ENCODE measurements at regions of chr21 and their contacts with region 1.

Region 1: DNA sequence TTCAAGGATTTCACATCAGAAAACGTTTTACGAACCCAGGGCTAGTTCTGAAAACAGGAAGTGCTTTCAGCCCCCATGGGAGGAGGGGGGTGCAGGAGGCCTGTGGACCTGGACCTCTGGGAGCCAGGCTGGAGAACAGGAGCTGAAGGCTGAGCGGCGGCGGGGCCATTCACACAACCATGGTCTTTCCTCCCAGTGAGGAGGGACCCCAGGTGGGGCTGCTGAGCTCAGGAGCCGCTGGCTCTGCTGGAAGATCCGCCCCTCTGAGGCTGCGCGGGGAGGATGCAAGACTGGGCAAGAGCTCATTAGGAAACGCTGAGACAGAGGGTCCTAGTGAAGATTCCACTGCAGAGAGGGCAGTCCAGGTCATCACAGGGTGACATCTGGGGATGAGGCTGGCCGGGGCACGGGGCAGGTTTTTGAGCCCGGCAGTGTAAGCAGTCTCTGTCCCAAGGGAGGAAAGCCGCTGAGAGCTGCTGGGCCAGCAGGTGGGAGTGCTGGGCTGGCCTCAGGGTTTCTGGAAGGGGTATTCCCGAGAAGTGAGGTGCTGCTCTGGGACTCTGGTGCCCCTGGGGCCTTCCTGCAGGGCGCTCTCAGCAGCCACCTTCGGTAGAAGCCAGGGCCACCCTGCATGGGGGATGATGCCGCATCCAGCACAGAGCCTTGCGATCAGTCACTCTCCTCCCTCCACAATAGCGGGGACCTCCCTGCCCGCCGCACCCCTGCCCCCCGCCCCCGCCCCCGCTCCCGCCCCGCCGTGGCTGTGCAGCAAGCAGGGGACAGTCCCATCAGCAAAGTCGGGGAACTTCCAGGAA is 7.5 kb downstream of the MX2 start:
- DNase-seq: peak; percentile 42
- ATAC-seq: peak; percentile 47
- H3K4me3 ChIP-seq: peak overlapping the region; percentile 78
- H3K27ac ChIP-seq: peak overlapping the region; percentile 98
- H3K4me1 ChIP-seq: peaks cover 42% of the 10 kb centered on the region
- H3K27me3 ChIP-seq: no peaks in the 10 kb centered on the region
- CTCF ChIP-seq: peak; percentile 24 to 60 (median 25); a peak in 4 of 6 replicates
- EP300 ChIP-seq: no peak
- POLR2A ChIP-seq: peak; percentile 70
- RAD21 ChIP-seq: peak; percentile 41

Region 2: GRCh38 chr21:41419911-41420862 is 50.9 kb after region 1 on chr21:
- CTCF ChIA-PET with region 1: interaction called, 24 read pairs
- POLR2A ChIA-PET with region 1: interaction called, 80 read pairs
- RAD21 ChIA-PET with region 1: interaction called, 36 read pairs
- SMC1A ChIA-PET with region 1: interaction called, 47 read pairs
- in situ Hi-C with region 1: no loop called
- intact Hi-C with region 1: no loop called
- DNase-seq: peak; percentile 39
- ATAC-seq: peak; percentile 94
- H3K4me3 ChIP-seq: peak overlapping the region; percentile 79
- H3K27ac ChIP-seq: peak overlapping the region; percentile 82
- H3K4me1 ChIP-seq: peaks cover 24% of the 10 kb centered on the region
- H3K27me3 ChIP-seq: no peaks in the 10 kb centered on the region
- CTCF ChIP-seq: no peak
- EP300 ChIP-seq: no peak; a peak in 1 of 4 replicates
- POLR2A ChIP-seq: peak; percentile 49; the same call in 1 of the 2 replicates
- RAD21 ChIP-seq: no peak

Region 3: GRCh38 chr21:41425954-41426675 is 56.8 kb after region 1 on chr21 and contains the start of gene MX1:
- CTCF ChIA-PET with region 1: interaction called, 24 read pairs
- POLR2A ChIA-PET with region 1: interaction called, 80 read pairs
- RAD21 ChIA-PET with region 1: interaction called, 36 read pairs
- SMC1A ChIA-PET with region 1: interaction called, 47 read pairs
- in situ Hi-C with region 1: no loop called
- intact Hi-C with region 1: loop called (anchors 1 kb)
- DNase-seq: peak; percentile 61
- ATAC-seq: peak; percentile 87
- H3K4me3 ChIP-seq: peak within 1 kb of the TSS; percentile 93
- H3K27ac ChIP-seq: peak within 1 kb of the TSS; percentile 100
- H3K4me1 ChIP-seq: peaks cover 44% of the 10 kb centered on the region
- H3K27me3 ChIP-seq: no peaks in the 10 kb centered on the region
- CTCF ChIP-seq: no peak
- EP300 ChIP-seq: no peak
- POLR2A ChIP-seq: peak; percentile 93
- RAD21 ChIP-seq: no peak
- polyA plus RNA-seq, gene MX1: 75.9 to 90.9 TPM

Region 4: DNA sequence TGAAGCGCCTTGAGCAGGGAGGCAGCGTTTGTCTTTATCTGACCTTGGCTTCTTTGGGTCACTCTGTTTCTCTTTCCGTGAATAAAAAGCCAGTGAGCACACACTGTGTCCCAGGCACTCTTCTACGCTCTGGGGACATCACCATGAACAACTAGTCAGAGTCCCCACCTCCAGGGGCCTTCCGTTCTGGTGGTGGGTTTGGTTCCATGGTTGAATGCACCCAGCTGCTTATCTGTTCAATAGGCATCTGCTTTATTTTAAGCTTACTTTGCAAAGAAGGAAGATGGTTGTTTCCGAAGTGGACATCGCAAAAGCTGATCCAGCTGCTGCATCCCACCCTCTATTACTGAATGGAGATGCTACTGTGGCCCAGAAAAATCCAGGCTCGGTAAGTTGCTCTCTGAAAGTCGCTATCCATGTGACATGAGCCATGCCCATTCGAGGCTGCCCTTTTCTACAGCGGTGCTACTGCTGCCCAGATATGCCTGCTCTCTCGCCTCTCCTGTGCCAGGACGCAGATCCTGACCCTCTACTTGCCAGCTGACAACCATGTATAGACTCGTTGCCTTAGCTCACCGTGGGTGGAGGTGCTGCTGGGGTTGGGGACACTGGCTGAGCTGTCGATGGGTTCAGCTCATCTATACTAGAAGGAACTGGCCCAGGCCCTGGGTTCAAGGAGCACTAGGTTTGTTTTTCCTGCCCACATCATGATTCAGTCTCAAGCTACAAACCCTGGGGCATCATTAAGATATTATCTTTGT is 62.7 kb after region 1 on chr21:
- CTCF ChIA-PET with region 1: interaction called, 24 read pairs
- POLR2A ChIA-PET with region 1: interaction called, 80 read pairs
- RAD21 ChIA-PET with region 1: interaction called, 6 read pairs
- SMC1A ChIA-PET with region 1: interaction called, 47 read pairs
- in situ Hi-C with region 1: no loop called
- intact Hi-C with region 1: no loop called
- DNase-seq: peak; percentile 56
- ATAC-seq: peak; percentile 68
- H3K4me3 ChIP-seq: no peak overlapping the region
- H3K27ac ChIP-seq: peak overlapping the region; percentile 22; the same call in 1 of the 2 replicates
- H3K4me1 ChIP-seq: peaks cover 39% of the 10 kb centered on the region
- H3K27me3 ChIP-seq: no peaks in the 10 kb centered on the region
- CTCF ChIP-seq: no peak
- EP300 ChIP-seq: peak in 1 of 2 experiments; percentile 29; a peak in 1 of 4 replicates
- POLR2A ChIP-seq: peak; percentile 67
- RAD21 ChIP-seq: no peak